Upper lobe of right lung (tissue), 1 donor: ENCODE measurements at regions of chr19 and their contacts with region 1.

Region 1: GRCh38 chr19:46840136-46840942 is 10.3 kb downstream of the AP2S1 start:
- DNase-seq: peak; percentile 70
- ATAC-seq: peak; percentile 77
- H3K4me3 ChIP-seq: no peak overlapping the region
- H3K27ac ChIP-seq: peak overlapping the region; percentile 11
- H3K4me1 ChIP-seq: peaks cover 10% of the 10 kb centered on the region
- H3K27me3 ChIP-seq: no peaks in the 10 kb centered on the region
- CTCF ChIP-seq: peak; percentile 78

Region 2: DNA sequence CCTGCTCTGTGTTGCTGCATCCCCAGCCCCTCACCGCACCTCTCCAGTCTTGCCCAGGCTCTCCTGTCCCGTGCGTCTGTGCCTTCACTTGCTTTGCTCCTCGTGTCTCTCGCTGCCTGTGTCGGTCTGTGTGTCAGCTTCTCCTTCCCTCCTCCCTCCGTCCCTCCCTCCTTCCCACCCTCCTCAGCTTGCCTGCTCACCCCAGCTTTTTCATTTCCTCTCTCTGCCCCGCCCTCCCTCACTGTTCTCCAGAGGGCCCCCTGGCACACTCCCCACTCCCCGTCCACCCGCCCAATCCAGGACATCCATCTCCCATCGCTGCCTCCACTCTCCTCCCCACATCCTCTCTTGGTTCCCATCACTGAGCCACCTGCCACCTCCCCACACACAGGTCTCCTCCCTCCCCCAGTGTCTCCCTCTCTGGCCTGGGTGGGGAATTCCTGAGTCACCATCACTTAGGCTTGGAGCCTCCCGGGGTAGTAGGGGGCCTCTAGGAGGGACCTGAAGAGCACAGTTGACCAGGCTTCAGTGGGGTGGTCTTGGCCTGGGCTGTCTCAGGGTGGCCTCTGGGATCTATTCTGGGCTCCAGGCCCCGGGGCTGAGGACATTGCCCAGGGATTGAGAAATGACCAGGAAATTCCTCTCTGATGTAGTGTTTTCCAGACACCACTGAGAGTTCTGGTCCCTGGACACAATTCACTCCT is 215.2 kb before region 1 on chr19 and contains the start of gene PTGIR:
- intact Hi-C with region 1: no loop called
- DNase-seq: no peak
- ATAC-seq: peak; percentile 59
- H3K4me3 ChIP-seq: peak within 1 kb of the TSS; percentile 43
- H3K27ac ChIP-seq: peak within 1 kb of the TSS; percentile 76
- H3K4me1 ChIP-seq: peaks cover 36% of the 10 kb centered on the region
- H3K27me3 ChIP-seq: no peaks in the 10 kb centered on the region
- CTCF ChIP-seq: no peak
- total RNA-seq, gene PTGIR: 12.6 TPM

Region 3: GRCh38 chr19:46639358-46640182 is 200.8 kb before region 1 on chr19:
- intact Hi-C with region 1: no loop called
- DNase-seq: peak; percentile 77
- ATAC-seq: peak; percentile 57
- H3K4me3 ChIP-seq: peak overlapping the region; percentile 41
- H3K27ac ChIP-seq: peak overlapping the region; percentile 51
- H3K4me1 ChIP-seq: peaks cover 18% of the 10 kb centered on the region
- H3K27me3 ChIP-seq: peaks cover 12% of the 10 kb centered on the region
- CTCF ChIP-seq: no peak

Region 4: DNA sequence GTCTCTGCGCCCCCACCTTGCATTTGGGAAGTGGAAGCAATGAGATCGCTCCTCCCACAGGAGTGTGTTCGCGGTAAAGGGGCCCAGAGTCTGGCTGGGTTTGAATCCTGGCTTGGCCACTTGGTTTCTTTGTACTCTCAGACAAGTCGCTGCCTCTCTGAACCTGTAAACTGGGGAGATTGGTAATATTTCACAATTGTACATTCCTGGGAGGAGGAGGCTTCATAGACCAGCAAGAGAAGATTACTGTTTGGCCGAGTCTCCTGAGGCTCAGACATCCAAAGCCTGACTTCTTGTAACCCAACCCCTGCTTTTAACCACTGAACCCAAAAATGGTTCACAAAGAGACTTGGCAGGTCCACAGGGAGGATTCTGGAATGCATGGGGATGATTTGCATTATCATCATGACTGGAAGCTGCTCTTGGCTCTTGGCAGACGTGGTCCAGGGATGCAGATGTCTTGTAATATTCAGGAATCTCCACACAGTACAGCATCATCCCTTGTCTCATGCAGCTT is 80.5 kb before region 1 on chr19:
- intact Hi-C with region 1: loop called (anchors 5 kb)
- DNase-seq: no peak
- ATAC-seq: no peak
- H3K4me3 ChIP-seq: no peak overlapping the region
- H3K27ac ChIP-seq: no peak overlapping the region
- H3K4me1 ChIP-seq: peaks cover 18% of the 10 kb centered on the region
- H3K27me3 ChIP-seq: no peaks in the 10 kb centered on the region
- CTCF ChIP-seq: no peak

Region 5: GRCh38 chr19:46788262-46788967 is 51.9 kb before region 1 on chr19 and contains the start of gene SLC1A5:
- intact Hi-C with region 1: no loop called
- DNase-seq: peak; percentile 99
- ATAC-seq: peak; percentile 91
- H3K4me3 ChIP-seq: peak within 1 kb of the TSS; percentile 90
- H3K27ac ChIP-seq: peak within 1 kb of the TSS; percentile 92
- H3K4me1 ChIP-seq: peaks cover 39% of the 10 kb centered on the region
- H3K27me3 ChIP-seq: no peaks in the 10 kb centered on the region
- CTCF ChIP-seq: no peak
- total RNA-seq, gene SLC1A5: 133 TPM

Region 6: DNA sequence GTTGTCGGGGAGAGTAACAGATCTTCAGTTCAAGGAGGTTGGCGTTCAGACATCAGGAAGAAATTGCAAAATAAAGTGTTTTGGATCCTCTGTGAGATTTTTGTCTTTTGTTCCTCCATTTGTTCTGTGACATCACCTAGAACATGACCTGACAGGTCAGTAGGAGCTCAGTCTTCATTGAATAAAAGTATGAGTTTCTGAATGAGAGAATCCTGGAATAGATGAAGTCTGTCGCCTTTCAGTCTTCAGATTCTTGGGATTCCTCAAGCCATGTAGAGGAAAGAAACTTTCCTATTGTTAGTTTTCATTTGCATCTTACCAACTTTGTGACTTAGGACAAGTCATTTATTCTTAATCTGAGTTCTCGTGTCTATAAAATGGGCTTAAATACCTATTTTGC is 34.9 kb after region 1 on chr19:
- intact Hi-C with region 1: no loop called
- DNase-seq: no peak
- ATAC-seq: no peak
- H3K4me3 ChIP-seq: no peak overlapping the region
- H3K27ac ChIP-seq: no peak overlapping the region
- H3K4me1 ChIP-seq: no peaks in the 10 kb centered on the region
- H3K27me3 ChIP-seq: no peaks in the 10 kb centered on the region
- CTCF ChIP-seq: no peak